Activated CD4-positive, alpha-beta T cell treated with anti-CD3 and anti-CD28 coated beads, Interleukin-2, amount 10 ng/mL, durations not matched to agents 24 days and 14 days (primary cell): ENCODE measurements at regions of chr14 and their contacts with region 1.

Region 1: GRCh38 chr14:34875031-34875922 is at the start of gene BAZ1A:
- DNase-seq: peak; percentile 85
- H3K4me3 Mint-ChIP-seq: peak within 1 kb of the TSS; percentile 100
- H3K27ac Mint-ChIP-seq: peak within 1 kb of the TSS; percentile 100
- H3K4me1 Mint-ChIP-seq: peaks cover 23% of the 10 kb centered on the region
- H3K27me3 Mint-ChIP-seq: no peaks in the 10 kb centered on the region
- total RNA-seq, gene BAZ1A: 89.7 TPM in 2 replicates

Region 2: DNA sequence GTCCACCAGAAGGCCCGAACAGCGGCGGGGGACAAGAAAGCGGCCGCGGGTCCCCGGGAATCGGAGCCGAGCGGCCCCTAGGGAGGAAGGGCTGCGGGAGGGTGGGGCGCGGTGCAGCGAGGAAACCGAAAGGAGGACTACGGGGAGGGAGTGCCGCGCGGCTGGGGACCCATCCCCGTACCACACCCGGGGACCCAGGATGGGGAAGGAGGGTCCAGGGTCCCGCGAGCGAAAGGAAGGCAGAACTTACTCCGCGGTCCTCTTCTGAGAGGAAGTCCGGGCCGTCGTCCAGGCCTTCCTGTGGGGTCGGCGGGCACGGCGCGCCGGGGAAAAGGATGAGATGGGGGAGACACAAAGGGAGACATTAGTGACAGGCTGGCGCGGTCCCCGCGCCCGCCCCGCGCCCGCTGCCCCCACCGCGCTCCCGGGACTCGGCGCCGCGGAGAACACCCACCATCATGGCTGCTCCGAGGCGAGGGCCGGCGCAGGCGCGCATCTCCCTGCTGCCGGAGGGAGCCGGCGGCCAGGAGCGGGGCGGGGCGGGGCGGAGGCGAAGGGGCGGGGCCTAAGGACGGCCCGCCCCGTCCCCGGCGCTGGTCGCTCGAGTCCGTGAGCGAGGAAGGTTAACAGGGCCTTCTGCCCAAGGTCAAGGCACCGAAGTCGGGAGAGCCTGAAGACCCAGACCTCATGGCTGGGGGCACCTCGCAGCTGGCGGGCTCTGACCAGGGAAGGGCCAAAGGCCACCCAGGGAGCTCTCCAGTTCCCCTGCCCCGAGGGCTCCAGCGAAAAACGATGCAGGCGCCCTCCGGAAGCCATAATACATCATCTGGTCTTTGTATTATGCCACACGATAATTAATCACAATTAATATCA is 245.4 kb before region 1 on chr14 and contains the start of gene SNX6:
- intact Hi-C with region 1: loop called (anchors 5 kb)
- DNase-seq: peak; percentile 94
- H3K4me3 Mint-ChIP-seq: peak within 1 kb of the TSS; percentile 91
- H3K27ac Mint-ChIP-seq: peak within 1 kb of the TSS; percentile 91
- H3K4me1 Mint-ChIP-seq: peaks cover 25% of the 10 kb centered on the region
- H3K27me3 Mint-ChIP-seq: peaks cover 13% of the 10 kb centered on the region
- total RNA-seq, gene SNX6: 68.6 and 70.4 TPM in 2 replicates

Region 3: DNA sequence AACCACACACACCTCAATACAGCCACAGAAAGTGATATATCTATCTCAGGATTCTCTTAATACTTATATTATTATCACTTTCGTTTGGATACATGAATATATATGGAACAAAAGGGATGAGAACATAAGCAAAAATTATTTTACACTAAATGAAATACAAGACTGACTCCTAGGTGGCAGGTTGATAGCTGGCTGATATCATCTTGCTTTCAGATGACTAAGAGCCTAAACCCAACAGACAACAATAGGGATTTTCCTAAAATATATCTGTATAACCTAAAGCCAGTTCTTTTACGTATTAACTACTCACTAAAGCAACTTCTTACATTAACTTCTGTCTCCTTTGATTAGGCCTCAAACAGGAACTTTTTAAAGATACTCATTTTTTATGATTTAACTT is 65.2 kb before region 1 on chr14:
- intact Hi-C with region 1: loop called (anchors 5 kb)
- DNase-seq: no peak
- H3K4me3 Mint-ChIP-seq: no peak overlapping the region
- H3K27ac Mint-ChIP-seq: no peak overlapping the region
- H3K4me1 Mint-ChIP-seq: peaks cover 14% of the 10 kb centered on the region
- H3K27me3 Mint-ChIP-seq: no peaks in the 10 kb centered on the region

Region 4: DNA sequence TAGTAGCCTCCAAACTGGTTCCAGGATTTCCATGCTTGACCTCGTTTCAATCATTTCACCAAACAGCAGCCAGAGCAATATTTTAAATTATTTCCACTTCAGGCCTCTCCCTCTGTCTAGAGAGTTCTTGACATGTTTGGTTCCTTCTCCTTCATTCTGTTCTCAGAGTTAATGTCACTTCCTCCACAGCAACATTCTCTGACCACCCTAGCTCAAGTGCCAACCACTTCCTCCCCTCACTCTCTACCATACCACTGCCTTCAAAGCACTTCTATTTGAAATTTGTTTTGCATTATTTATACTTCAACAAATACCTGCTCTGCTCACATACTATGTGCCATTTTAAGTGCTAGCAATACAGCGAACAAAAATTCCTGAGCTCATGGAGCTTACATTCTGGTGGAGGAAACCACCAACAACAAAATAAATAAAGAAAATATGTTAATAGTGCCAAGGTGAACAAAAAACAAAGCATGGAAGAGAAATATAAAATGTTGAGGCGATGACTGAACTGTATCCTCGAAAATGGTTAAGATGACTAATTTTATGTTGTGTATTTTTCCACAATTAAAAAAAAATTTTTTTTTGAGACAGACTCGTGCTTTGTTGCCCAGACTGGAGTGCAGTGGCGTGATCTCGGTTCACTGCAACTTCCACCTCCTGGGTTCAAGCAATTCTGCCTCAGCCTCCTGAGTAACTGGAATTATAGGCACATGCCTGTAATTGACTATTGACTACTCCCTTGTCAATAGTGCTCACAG is 17.4 kb before region 1 on chr14:
- intact Hi-C with region 1: loop called (anchors 2 kb)
- DNase-seq: peak; percentile 76
- H3K4me3 Mint-ChIP-seq: peak overlapping the region; percentile 30
- H3K27ac Mint-ChIP-seq: peak overlapping the region; percentile 80
- H3K4me1 Mint-ChIP-seq: peaks cover 21% of the 10 kb centered on the region
- H3K27me3 Mint-ChIP-seq: no peaks in the 10 kb centered on the region

Region 5: GRCh38 chr14:34951271-34951670 is 76.0 kb after region 1 on chr14:
- intact Hi-C with region 1: no loop called
- DNase-seq: no peak
- H3K4me3 Mint-ChIP-seq: no peak overlapping the region
- H3K27ac Mint-ChIP-seq: no peak overlapping the region
- H3K4me1 Mint-ChIP-seq: no peaks in the 10 kb centered on the region
- H3K27me3 Mint-ChIP-seq: no peaks in the 10 kb centered on the region

Region 6: DNA sequence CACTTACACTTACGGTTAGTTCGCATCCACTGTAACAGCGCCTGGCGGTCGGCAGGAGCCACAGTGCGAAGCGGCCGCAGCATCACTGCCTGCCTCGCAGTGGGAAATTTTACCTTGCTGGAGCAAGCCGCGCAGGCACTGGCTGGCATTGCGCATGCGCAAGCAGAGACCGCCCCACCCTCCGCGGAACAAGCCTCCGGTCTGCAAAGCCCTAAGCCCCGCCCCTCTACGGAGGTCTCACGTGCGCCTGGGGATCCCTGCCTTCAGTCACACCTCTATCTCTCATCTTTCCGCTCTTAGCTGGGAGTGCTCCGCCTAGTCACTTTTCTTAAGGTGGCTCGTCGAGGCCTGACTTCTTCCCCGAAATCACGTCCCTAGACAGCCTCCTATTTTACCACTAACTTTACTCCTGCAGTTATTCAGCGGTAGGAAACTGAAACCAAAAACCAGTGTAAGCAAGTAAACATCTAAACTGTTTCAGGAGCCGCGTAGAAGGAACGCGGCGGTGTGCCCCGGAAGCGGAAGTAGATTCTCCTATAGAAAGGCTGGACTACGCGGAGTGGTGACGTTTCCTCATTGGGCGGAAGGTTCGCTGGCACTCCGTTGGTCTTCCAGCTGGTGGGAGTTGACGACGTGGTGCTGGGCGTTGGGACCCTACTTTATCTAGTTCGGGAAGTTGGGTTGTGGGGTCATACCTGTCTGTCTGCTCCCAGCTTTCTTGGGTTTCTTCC is 107.3 kb after region 1 on chr14 and contains the start of gene SRP54:
- intact Hi-C with region 1: loop called (anchors 1 kb)
- DNase-seq: peak; percentile 100
- H3K4me3 Mint-ChIP-seq: no peak within 1 kb of the TSS
- H3K27ac Mint-ChIP-seq: no peak within 1 kb of the TSS
- H3K4me1 Mint-ChIP-seq: peaks cover 17% of the 10 kb centered on the region
- H3K27me3 Mint-ChIP-seq: no peaks in the 10 kb centered on the region
- total RNA-seq, gene SRP54: 73.6 and 73.8 TPM in 2 replicates

Region 7: DNA sequence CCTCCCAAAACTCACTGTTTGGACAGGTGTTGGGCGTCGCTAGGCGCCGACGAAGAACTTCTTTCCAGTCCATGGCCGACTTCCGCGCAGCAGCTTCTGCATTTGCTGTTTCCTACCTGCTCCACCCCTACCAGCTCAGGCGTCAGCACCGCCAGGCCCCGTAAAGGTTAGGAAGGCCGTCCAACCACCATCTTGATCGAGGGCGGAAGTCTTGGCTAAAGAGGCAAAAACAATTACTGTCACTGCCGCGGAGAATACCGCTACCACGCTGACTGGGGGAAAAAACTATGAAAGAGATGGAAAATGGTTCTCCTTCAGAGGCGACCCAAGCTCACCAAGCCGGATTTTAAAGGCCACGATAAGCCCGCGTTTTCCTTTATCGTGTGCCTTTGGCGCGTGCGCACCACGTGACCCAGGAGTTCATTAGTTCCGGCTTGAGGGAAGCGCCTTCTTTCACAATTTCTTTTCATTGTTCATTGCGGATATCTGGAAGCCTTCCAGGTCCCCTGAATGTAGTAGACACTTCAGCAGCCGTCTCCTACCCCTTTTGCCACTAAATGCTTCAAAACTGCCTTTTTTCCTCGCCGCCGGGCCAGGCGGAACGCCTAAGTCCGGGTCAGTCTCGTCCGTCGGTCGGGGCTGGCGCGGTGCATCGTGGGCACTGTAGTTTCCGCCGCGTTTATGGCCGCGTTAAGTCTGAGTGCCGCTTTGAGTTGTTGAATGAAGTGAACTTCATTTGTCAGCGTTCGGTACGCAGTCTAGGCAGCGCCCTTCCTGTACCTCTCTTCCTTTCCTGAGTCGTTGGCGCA is 246.8 kb after region 1 on chr14 and contains the starts of genes PPP2R3C and PRORP:
- intact Hi-C with region 1: loop called (anchors 1 kb)
- DNase-seq: peak; percentile 97
- H3K4me3 Mint-ChIP-seq: peak within 1 kb of the TSS; percentile 82
- H3K27ac Mint-ChIP-seq: peak within 1 kb of the TSS; percentile 100
- H3K4me1 Mint-ChIP-seq: peaks cover 56% of the 10 kb centered on the region
- H3K27me3 Mint-ChIP-seq: no peaks in the 10 kb centered on the region
- total RNA-seq, gene PPP2R3C: 51.6 and 58.1 TPM in 2 replicates
- total RNA-seq, gene PRORP: 35.6 and 41.1 TPM in 2 replicates

Region 8: DNA sequence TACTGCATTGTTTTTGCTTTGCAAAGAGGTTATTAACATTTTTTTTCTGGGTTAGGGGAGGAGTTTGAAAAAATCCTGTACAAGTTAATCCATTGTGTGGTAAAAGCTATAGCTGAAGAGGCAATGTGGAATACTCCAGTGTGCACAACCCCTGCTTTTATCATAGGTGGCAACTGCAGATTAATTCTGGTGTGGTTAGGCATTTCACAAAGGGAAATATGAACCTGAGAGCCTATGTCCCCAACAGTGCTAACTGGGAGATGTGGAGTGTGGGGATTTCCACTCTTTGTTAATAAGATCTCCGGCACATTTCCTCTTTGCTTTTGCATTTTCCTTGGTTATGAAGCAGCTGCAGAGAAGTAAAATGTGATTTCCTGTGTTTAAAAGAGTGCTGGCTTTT is 280.7 kb after region 1 on chr14:
- intact Hi-C with region 1: no loop called
- DNase-seq: peak; percentile 67
- H3K4me3 Mint-ChIP-seq: peak overlapping the region; percentile 34
- H3K27ac Mint-ChIP-seq: peak overlapping the region; percentile 64
- H3K4me1 Mint-ChIP-seq: peaks cover 47% of the 10 kb centered on the region
- H3K27me3 Mint-ChIP-seq: no peaks in the 10 kb centered on the region